Activated T-helper 1 cell treated with anti-CD3 and anti-CD28 coated beads, Interleukin-12 subunit alpha, Interleukin-12 subunit beta, Interleukin-2, Interleukin-4 antibody, amounts not matched to agents 30 ng/mL and 10 ng/mL and 1 ng/mL, durations not matched to agents 14 hours and 24 hours and 36 hours (primary cell): ENCODE measurements at regions of chr1 and their contacts with region 1.

Region 1: DNA sequence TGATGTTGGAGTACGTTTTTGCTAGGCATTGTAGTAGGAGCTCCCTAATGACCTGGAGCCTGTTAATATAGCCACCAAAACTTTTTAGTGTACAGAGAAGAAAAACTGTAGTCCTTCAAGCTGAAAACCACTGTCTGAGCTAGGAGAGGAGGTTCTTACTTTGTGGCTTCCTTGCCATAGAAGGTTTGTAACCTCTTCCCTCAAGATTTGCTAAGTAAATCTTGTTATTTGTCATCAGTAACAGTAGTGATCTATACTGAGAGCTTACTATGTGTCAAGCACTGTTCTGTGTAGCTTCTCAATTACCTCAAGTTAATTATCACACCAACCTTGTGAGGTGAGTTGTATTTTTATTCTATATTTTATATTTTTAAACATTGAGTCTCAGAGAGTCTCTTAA is 21.2 kb upstream of the LRRC8C start:
- DNase-seq: no peak
- H3K4me3 Mint-ChIP-seq: peak overlapping the region; percentile 73
- H3K27ac Mint-ChIP-seq: peak overlapping the region; percentile 99
- H3K4me1 Mint-ChIP-seq: peaks cover 88% of the 10 kb centered on the region
- H3K27me3 Mint-ChIP-seq: no peaks in the 10 kb centered on the region

Region 2: GRCh38 chr1:89499320-89499719 is 112.4 kb before region 1 on chr1:
- intact Hi-C with region 1: no loop called
- DNase-seq: no peak
- H3K4me3 Mint-ChIP-seq: no peak overlapping the region
- H3K27ac Mint-ChIP-seq: no peak overlapping the region
- H3K4me1 Mint-ChIP-seq: no peaks in the 10 kb centered on the region
- H3K27me3 Mint-ChIP-seq: peaks cover 12% of the 10 kb centered on the region

Region 3: GRCh38 chr1:89589515-89589914 is 22.2 kb before region 1 on chr1:
- intact Hi-C with region 1: loop called (anchors 2 kb)
- DNase-seq: no peak
- H3K4me3 Mint-ChIP-seq: peak overlapping the region; percentile 11
- H3K27ac Mint-ChIP-seq: peak overlapping the region; percentile 74
- H3K4me1 Mint-ChIP-seq: peaks cover 89% of the 10 kb centered on the region
- H3K27me3 Mint-ChIP-seq: no peaks in the 10 kb centered on the region

Region 4: DNA sequence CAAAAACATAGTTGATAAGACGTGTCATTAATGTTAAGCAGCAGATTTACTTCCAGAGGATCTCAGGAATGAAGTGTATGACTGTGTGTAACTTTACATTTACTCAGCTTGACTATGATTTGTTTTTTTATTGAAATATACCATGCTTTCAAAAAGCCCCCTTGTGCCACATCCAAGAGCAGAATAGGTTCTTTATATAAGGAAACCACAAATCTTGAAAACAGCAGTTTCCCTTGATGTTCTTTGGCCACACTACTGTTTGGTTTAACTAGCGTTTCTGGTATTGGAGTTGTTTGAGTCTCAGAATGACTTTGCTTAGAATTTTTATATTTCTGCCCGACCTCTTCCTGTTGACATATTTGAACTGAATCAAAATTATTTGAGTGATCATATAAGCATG is 46.2 kb after region 1 on chr1:
- intact Hi-C with region 1: loop called (anchors 1 kb)
- DNase-seq: peak; percentile 24
- H3K4me3 Mint-ChIP-seq: peak overlapping the region; percentile 62
- H3K27ac Mint-ChIP-seq: peak overlapping the region; percentile 72
- H3K4me1 Mint-ChIP-seq: peaks cover 91% of the 10 kb centered on the region
- H3K27me3 Mint-ChIP-seq: no peaks in the 10 kb centered on the region

Region 5: GRCh38 chr1:89671775-89672488 is 60.2 kb after region 1 on chr1:
- intact Hi-C with region 1: no loop called
- DNase-seq: no peak
- H3K4me3 Mint-ChIP-seq: no peak overlapping the region
- H3K27ac Mint-ChIP-seq: no peak overlapping the region
- H3K4me1 Mint-ChIP-seq: peaks cover 89% of the 10 kb centered on the region
- H3K27me3 Mint-ChIP-seq: no peaks in the 10 kb centered on the region

Region 6: DNA sequence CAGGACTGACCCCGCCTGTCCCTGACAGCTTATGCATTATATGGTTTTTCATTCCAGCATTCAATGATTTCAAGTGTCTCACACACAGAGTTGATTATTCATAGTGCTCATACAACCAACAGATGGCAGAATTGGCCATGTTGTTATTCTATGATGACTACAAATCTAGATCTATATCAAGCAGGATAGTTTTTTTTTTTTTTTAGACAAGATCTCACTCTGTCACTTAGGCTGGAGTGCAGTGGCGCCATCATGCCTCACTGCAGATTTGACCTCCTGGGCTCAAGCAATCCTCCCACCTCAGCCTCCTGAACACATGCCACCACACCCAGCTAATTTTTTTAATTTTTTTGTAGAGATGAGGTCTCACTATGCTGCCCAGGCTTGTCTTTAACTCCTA is 169.0 kb after region 1 on chr1:
- intact Hi-C with region 1: loop called (anchors 1 kb)
- DNase-seq: no peak
- H3K4me3 Mint-ChIP-seq: peak overlapping the region; percentile 59
- H3K27ac Mint-ChIP-seq: peak overlapping the region; percentile 97
- H3K4me1 Mint-ChIP-seq: peaks cover 48% of the 10 kb centered on the region
- H3K27me3 Mint-ChIP-seq: peaks cover 4% of the 10 kb centered on the region

Region 7: DNA sequence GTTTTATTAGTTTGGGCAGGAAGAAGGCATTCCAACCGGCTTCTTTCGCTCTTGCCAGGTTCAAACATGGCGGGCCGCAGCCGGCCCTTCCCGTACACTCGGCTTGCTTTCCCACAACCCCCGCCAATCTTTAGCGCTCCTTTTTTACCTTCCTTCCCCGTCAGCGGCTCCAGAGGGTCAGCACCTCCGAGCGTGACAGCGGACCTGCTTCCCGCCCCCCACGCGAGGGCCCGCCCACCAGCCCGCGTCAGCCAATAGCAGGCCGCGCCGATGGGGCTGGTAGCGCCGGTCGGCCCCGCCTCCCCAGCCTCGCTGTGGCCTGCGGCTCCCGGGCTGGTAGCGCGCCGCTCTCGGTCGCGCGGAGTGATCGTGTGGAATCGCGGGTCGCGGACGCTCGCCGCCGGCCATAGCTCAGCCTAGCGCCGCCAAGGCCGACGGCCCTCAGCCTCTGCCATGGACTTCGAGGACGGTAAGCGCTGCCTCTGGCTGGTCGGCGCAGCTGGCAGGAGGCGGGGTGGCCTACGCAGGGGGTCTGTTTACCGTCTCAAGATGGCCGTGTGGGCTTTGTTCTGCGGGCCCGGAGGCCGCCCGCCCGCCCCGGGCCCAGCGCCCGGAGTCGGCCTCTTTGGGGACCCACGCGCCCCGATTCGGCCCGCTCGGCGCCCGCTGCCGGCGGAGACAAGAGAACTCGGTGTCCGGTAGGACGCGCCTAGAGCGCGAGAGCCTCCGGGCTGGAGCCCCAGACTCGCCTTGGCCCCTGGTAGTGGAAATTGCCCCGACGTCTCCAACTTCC is 383.3 kb after region 1 on chr1 and contains the start of gene ZNF326:
- intact Hi-C with region 1: loop called (anchors 2 kb)
- DNase-seq: peak; percentile 93
- H3K4me3 Mint-ChIP-seq: peak within 1 kb of the TSS; percentile 99
- H3K27ac Mint-ChIP-seq: peak within 1 kb of the TSS; percentile 97
- H3K4me1 Mint-ChIP-seq: peaks cover 46% of the 10 kb centered on the region
- H3K27me3 Mint-ChIP-seq: no peaks in the 10 kb centered on the region
- total RNA-seq, gene ZNF326: 37.3 and 39.1 TPM in 2 replicates